ENCODE measurements at regions of chr7 and their contacts with region 1.

Region 1: GRCh38 chr7:116211006-116211912 is 920 bp downstream of the TES start:
- DNase-seq: peak; percentile 81
- ATAC-seq: peak; percentile 75
- H3K4me3 Mint-ChIP-seq: peak overlapping the region; percentile 97
- H3K27ac Mint-ChIP-seq: peak overlapping the region; percentile 97
- H3K4me1 Mint-ChIP-seq: peaks cover 50% of the 10 kb centered on the region
- H3K27me3 Mint-ChIP-seq: no peaks in the 10 kb centered on the region
- CTCF ChIP-seq: no peak

Region 2: GRCh38 chr7:116224492-116225098 is 13.3 kb after region 1 on chr7:
- CTCF ChIA-PET with region 1: interaction called, 18 read pairs
- POLR2A ChIA-PET with region 1: interaction called, 13 read pairs
- intact Hi-C with region 1: no loop called
- DNase-seq: no peak
- ATAC-seq: peak; percentile 82
- H3K4me3 Mint-ChIP-seq: peak overlapping the region; percentile 60
- H3K27ac Mint-ChIP-seq: peak overlapping the region; percentile 44
- H3K4me1 Mint-ChIP-seq: peaks cover 78% of the 10 kb centered on the region
- H3K27me3 Mint-ChIP-seq: no peaks in the 10 kb centered on the region
- CTCF ChIP-seq: no peak